Mammary epithelial cell (primary cell): ENCODE measurements at regions of chr4 and their contacts with region 1.

Region 1: DNA sequence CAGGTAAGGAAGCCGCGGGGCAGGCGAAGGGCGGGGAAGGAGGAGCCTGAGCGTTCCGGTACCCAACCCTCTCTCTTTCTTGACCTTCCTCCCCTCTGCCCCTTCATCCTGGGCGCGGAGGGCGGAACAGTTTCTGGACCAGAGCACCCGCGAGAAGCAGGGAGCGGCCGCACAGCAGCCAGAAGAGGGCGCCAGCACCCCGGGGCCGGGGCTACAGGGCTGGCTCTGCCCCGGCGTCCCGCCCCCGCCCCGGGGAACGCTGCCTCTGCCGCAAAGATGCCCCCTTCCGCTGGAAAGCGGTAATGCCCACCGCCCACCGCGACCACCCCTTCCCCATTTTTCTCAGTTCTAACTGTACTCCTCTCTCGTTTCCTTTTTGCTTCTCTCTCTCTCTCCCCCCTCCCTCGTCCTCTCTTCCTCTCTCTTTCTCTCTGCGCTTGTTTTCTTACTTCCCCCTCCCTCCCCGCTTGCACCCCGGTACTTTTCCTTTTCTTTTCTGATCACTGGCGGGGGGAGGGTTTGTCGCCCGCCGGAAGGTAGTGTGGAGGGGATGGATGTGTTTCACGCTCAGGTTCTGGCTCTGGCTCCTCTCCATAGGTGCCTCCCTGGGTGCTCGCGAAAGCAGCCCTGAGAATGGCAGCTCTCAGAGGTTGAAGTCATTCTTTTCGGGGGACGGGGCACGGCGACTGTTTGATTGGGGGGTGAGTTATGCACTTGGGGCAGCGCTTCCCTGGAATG is 13.1 kb upstream of the PRDM8 start:
- DNase-seq: peak; percentile 76
- H3K4me3 ChIP-seq: peak overlapping the region; percentile 56 to 93 (median 67)
- H3K27ac ChIP-seq: peak overlapping the region; percentile 40
- H3K4me1 ChIP-seq: peaks cover 58% of the 10 kb centered on the region
- H3K27me3 ChIP-seq: no peaks in the 10 kb centered on the region
- CTCF ChIP-seq: peak; percentile 60 to 89

Region 2: GRCh38 chr4:79917246-79917645 is 267.0 kb before region 1 on chr4:
- CTCF ChIA-PET with region 1: no interaction called
- dilution Hi-C with region 1: no loop called
- in situ Hi-C with region 1: loop called in 1 of 2 experiments (anchors 25 kb)
- intact Hi-C with region 1: loop called (anchors 1 kb)
- DNase-seq: peak; percentile 32
- H3K4me3 ChIP-seq: no peak overlapping the region
- H3K27ac ChIP-seq: no peak overlapping the region
- H3K4me1 ChIP-seq: peaks cover 7% of the 10 kb centered on the region
- H3K27me3 ChIP-seq: no peaks in the 10 kb centered on the region
- CTCF ChIP-seq: peak; percentile 57 to 86

Region 3: GRCh38 chr4:80079255-80079923 is 104.8 kb before region 1 on chr4:
- CTCF ChIA-PET with region 1: interaction called, 11 read pairs
- dilution Hi-C with region 1: no loop called
- in situ Hi-C with region 1: loop called in 1 of 2 experiments (anchors 5 kb)
- intact Hi-C with region 1: no loop called
- DNase-seq: no peak
- H3K4me3 ChIP-seq: no peak overlapping the region
- H3K27ac ChIP-seq: peak overlapping the region; percentile 1
- H3K4me1 ChIP-seq: peaks cover 48% of the 10 kb centered on the region
- H3K27me3 ChIP-seq: no peaks in the 10 kb centered on the region
- CTCF ChIP-seq: no peak

Region 4: DNA sequence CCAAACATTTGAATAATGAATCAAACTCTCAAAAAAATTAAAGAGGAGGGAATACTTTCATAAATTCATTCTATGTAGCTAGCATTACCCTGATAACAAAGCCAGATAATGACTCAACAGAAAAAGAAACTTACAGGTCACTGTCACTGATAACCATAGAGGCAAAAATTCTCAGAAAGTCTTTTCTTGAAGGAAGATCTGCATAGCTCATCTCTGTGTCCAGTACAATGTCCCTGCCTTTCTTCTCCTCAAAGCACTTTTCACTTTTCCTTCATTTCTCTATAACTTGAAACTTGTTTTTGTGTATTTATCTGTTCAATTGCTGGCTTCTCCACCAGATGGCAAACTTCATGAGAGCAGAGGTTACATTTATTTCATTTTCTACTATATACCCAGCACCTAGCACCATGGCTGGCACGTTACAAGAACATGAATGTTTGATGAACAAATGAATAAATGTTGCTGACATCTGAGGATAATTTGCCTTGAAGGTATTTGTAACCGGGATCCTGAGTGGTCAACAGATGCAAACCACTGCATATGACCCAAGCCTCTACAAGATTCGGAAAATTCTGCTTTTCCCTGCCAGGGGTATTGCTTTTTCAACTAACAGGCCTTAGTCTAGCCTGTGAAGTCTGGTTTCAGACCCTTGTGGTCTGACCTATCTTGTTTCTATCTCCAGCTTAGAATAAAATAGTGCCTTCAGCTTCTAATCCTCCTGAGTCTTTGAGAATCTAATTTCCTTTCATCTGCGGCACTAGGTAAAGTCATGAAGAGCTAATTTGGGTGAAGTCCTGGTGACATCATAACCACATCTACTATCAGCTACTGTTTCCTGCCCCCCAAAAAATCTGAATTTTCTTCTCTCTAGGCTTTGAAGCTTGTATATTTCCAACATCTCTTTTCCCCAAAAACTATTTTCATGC is 58.7 kb before region 1 on chr4:
- CTCF ChIA-PET with region 1: interaction called, 3 read pairs
- dilution Hi-C with region 1: no loop called
- in situ Hi-C with region 1: no loop called
- intact Hi-C with region 1: loop called (anchors 1 kb)
- DNase-seq: peak; percentile 31
- H3K4me3 ChIP-seq: peak overlapping the region; percentile 15 to 30 (median 22)
- H3K27ac ChIP-seq: peak overlapping the region; percentile 68
- H3K4me1 ChIP-seq: peaks cover 46% of the 10 kb centered on the region
- H3K27me3 ChIP-seq: no peaks in the 10 kb centered on the region
- CTCF ChIP-seq: peak; percentile 56 to 57

Region 5: DNA sequence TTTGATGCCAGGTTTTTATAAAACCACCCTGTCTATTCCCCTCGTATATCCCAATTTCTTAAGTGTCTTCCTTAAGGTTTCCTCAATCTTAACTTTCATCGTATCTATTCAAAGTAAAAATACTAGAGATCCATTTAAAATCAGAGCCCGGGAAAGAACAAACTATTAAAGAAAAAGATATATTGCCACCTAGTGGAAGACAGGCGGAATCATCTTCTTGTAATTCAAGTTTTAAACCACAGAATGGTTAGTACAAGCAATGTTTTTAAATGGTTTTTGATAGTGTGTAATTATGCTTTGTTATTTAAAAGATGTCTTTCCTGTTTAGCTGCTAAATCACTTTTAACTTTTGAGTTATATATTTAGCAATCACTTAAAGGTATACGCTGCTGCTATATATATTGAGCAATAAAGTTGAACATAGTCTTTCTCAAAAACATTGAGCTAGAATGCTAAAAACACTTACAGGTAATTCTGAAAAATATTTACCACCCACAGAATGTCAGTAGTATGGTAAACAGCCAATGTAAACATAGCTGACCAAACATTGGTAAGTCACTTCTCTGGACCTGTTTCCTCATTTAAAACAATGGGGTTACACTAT is 31.3 kb after region 1 on chr4:
- CTCF ChIA-PET with region 1: interaction called, 3 read pairs
- dilution Hi-C with region 1: no loop called
- in situ Hi-C with region 1: no loop called
- intact Hi-C with region 1: loop called (anchors 1 kb)
- DNase-seq: no peak
- H3K4me3 ChIP-seq: no peak overlapping the region
- H3K27ac ChIP-seq: no peak overlapping the region
- H3K4me1 ChIP-seq: peaks cover 16% of the 10 kb centered on the region
- H3K27me3 ChIP-seq: no peaks in the 10 kb centered on the region
- CTCF ChIP-seq: peak; percentile 60 to 61

Region 6: DNA sequence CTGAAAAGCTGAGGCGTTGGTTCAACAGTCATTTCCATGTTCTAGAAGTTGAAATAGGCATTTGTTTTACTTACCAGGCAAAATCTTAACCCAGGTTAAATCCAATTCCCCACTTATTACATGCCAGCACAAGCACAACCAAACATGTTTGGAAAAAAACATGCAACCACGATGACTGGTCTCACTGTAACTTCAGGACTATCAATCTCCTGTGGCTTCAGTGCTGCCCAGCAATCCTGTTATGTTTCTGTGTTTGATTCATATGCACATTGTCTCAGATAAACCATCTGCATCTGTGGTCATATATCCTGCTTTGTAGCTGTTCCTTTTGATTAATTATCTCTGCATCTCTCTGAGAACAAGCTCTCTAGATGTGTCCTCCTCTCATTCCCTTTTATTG is 41.4 kb after region 1 on chr4:
- CTCF ChIA-PET with region 1: no interaction called
- dilution Hi-C with region 1: no loop called
- in situ Hi-C with region 1: no loop called
- intact Hi-C with region 1: no loop called
- DNase-seq: peak; percentile 73
- H3K4me3 ChIP-seq: no peak overlapping the region
- H3K27ac ChIP-seq: no peak overlapping the region
- H3K4me1 ChIP-seq: no peaks in the 10 kb centered on the region
- H3K27me3 ChIP-seq: no peaks in the 10 kb centered on the region
- CTCF ChIP-seq: no peak